ENCODE measurements at regions of chr3 and their contacts with region 1.

Region 1: GRCh38 chr3:141192345-141192744 is 39.3 kb upstream of the PXYLP1 start:
- DNase-seq: peak; percentile 84
- CTCF ChIP-seq: peak; percentile 98

Region 2: GRCh38 chr3:140898340-140899180 is 293.8 kb before region 1 on chr3:
- CTCF ChIA-PET with region 1: interaction called, 33 read pairs
- POLR2A ChIA-PET with region 1: no interaction called
- DNase-seq: peak; percentile 38
- CTCF ChIP-seq: peak; percentile 72

Region 3: DNA sequence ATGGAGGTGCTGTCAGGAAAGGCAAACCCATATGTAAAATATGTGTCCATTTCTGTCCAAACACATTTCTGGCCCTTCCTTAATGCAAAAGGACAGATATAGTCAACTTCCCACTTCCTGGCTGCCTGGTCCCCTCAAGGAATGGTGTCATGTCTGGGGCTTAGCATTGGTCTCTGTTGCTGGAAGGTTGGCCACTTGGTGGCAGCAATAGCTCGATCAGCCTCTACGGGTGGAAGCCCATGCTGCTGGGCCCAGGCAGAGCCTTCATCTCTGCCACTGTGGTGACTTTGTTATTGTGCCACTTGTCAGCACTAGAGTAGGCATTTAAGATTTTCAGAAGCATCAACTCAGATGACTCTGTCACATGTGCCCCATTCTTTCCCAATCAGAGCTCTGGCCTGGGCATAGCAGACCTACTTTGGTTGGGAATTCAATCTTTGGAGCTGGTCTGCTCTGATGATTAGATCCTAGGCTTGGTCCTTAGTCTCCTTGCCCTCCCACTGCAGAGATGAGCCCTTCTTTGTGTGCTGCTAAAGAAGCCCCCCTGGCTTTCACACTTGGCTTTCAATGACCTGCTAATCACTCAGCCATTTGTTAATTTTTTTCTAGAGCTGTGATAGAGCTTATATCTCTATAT is 192.2 kb before region 1 on chr3:
- CTCF ChIA-PET with region 1: interaction called, 33 read pairs
- POLR2A ChIA-PET with region 1: no interaction called
- DNase-seq: peak; percentile 44
- CTCF ChIP-seq: peak; percentile 66

Region 4: DNA sequence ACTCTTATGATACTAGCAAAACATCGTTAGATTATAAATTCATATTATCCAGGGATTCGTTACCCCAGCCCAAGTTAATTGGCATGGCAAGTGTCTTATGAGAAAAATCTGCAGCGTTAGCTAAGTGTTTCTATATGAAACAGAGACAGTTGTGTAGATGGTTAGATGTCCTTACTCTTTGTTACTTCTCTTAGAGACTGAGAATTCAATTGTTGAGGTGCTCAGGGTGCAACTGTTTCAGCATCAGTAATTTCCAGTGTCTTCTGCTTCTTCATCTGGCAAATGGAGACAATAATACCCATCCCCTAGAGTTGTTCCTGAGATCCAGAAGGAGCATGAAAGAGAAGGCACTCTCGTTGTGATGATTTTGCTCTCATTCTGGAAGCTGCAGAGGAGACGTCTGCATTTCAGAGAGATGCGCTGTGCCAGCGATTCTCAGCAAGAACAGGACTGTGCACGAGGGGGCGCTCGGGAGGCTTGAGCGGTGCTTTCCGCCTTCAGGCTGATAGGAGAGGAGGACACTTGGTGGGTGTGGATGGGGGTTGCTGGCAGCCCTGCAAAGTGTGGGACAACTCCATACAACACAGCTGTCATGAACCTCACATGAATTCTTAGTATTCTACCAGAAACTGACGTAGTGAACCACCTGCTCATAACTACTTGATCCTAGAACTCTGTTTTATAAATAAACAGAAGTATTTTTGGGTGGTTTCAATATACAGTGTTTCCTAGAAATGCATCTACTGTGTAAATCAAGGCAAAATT is 180.9 kb before region 1 on chr3:
- CTCF ChIA-PET with region 1: interaction called, 18 read pairs
- POLR2A ChIA-PET with region 1: no interaction called
- DNase-seq: peak; percentile 64
- CTCF ChIP-seq: peak; percentile 88

Region 5: DNA sequence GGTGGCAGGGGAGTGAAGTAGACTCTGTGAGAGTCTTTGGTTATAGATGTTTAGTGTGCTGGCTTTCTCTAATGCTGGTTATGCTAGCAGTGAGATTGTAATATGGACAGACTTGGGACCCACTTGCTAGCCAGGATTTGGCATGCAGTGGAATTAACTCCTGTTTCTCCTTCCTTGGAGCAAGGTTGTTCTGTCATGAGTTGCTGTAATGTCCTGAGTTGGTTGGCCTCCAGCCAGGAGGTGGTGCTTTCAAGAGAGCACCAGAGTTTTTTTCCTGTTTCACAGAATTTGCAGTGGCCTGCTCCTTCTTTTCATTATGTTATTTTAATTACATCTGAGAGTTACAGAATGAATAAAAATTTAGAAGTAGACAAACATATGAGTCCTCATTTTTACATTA is 48.8 kb before region 1 on chr3:
- CTCF ChIA-PET with region 1: no interaction called
- POLR2A ChIA-PET with region 1: no interaction called
- DNase-seq: no peak
- CTCF ChIP-seq: no peak

Region 6: DNA sequence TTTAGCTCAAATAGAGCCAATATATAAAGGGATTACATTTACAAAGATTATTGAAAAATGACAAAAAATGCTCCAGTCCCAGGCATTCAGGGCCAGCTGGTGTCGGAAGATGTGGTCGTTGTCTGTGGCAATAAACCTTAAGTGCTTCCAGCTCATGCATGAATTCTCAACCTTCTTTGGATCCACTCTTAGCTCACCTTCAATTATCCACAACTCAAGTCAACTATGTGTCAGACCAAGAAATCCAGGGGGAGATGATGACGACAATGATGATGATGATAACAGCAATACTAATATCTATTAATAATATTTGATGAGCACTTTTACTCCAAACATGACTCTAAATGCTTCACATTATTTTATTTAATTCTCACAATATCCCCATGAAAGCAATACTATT is 14.3 kb before region 1 on chr3:
- CTCF ChIA-PET with region 1: interaction called, 22 read pairs
- POLR2A ChIA-PET with region 1: no interaction called
- DNase-seq: no peak
- CTCF ChIP-seq: no peak